ENCODE measurements at regions of chr1 and their contacts with region 1.

Region 1: GRCh38 chr1:182604169-182605164 is at the start of gene RGS16:
- DNase-seq: peak; percentile 97
- H3K4me3 Mint-ChIP-seq: no peak within 1 kb of the TSS
- H3K27ac Mint-ChIP-seq: no peak within 1 kb of the TSS
- H3K4me1 Mint-ChIP-seq: peaks cover 45% of the 10 kb centered on the region
- H3K27me3 Mint-ChIP-seq: no peaks in the 10 kb centered on the region
- total RNA-seq, gene RGS16: 35.3 to 37.3 TPM

Region 2: DNA sequence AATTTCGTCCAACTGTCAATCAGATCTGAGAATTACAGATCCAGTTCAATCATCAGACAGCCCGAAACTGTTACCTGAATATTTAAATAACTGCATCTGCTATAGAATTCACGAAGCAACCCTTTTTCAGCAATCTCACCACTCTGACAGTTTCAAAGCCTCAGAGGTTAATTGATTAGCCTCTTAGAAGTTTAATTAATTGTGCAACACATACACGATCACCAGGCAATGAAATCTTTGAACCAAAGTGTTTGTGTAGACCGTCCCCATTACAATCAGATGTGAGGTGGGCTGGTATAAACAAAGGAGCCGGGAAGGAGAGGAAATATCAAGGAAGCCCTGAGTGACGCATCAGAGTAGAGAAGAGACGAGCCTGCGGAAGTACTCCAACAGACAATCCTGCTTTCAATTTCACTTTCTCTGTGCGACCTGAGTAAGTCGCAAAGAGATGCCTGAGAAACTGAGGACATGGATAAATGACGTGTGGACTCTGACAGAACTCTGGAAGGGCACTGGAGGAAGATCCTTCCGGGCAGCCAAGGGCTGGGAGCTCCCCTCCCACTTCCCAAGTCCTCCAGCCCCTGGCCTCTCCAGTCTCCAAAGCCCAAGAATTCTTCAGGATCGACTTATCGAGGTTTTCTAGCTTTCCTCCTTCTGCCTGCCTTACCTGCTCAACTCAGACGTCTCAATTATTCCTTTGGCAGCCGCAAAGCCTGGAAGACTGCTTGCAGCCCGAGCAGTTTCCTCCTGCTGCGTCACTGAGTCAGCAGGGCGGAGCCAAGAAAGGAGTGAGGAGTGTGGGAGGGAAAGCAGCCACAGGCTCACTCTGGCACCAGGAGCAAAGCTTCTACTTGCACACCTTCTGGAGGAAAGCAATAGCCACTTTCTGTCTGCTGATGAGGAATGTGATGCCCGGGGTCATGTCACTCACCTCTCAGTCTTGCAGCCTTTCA is 15.7 kb before region 1 on chr1 and contains the start of gene RNASEL:
- CTCF ChIA-PET with region 1: interaction called, 92 read pairs
- intact Hi-C with region 1: loop called (anchors 1 kb)
- DNase-seq: peak; percentile 62
- H3K4me3 Mint-ChIP-seq: peak within 1 kb of the TSS; percentile 86
- H3K27ac Mint-ChIP-seq: peak within 1 kb of the TSS; percentile 98
- H3K4me1 Mint-ChIP-seq: peaks cover 49% of the 10 kb centered on the region
- H3K27me3 Mint-ChIP-seq: no peaks in the 10 kb centered on the region
- total RNA-seq, gene RNASEL: 2.5 TPM

Region 3: DNA sequence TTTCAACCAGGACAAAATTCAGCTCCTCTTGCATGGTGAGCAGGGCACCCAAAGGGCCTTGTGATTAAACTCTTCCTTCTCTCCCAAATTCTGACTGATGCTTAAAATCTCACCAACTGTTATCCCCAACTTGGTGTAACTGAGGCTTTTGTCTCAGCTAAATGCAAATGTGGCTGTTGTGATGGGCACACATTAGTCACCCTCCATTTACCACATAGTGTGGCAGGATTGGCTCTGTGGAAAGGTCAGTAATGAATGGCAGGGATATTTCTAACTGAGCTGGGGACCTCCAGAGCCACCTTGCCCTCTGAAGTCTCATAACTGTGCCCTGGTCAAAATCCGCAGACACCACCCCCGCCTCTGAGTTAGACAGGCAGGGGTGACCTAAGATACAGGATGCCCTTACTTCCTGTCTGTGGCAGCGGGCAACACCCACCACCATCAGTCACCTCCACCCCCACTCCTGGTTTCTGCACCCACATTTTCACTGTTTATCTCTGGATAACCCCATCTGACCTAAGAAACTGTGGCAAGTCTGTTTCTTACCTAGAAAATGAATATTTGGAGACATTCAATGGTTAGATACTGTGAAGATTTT is 25.1 kb after region 1 on chr1:
- CTCF ChIA-PET with region 1: interaction called, 6 read pairs
- intact Hi-C with region 1: loop called (anchors 1 kb)
- DNase-seq: peak; percentile 68
- H3K4me3 Mint-ChIP-seq: no peak overlapping the region
- H3K27ac Mint-ChIP-seq: peak overlapping the region; percentile 51
- H3K4me1 Mint-ChIP-seq: peaks cover 57% of the 10 kb centered on the region
- H3K27me3 Mint-ChIP-seq: no peaks in the 10 kb centered on the region

Region 4: GRCh38 chr1:182674346-182675246 is 70.1 kb after region 1 on chr1:
- CTCF ChIA-PET with region 1: interaction called, 12 read pairs
- intact Hi-C with region 1: loop called (anchors 1 kb)
- DNase-seq: no peak
- H3K4me3 Mint-ChIP-seq: no peak overlapping the region
- H3K27ac Mint-ChIP-seq: no peak overlapping the region
- H3K4me1 Mint-ChIP-seq: peaks cover 3% of the 10 kb centered on the region
- H3K27me3 Mint-ChIP-seq: peaks cover 4% of the 10 kb centered on the region

Region 5: GRCh38 chr1:182703540-182703939 is 99.1 kb after region 1 on chr1:
- CTCF ChIA-PET with region 1: no interaction called
- intact Hi-C with region 1: no loop called
- DNase-seq: no peak
- H3K4me3 Mint-ChIP-seq: no peak overlapping the region
- H3K27ac Mint-ChIP-seq: no peak overlapping the region
- H3K4me1 Mint-ChIP-seq: no peaks in the 10 kb centered on the region
- H3K27me3 Mint-ChIP-seq: peaks cover 9% of the 10 kb centered on the region

Region 6: DNA sequence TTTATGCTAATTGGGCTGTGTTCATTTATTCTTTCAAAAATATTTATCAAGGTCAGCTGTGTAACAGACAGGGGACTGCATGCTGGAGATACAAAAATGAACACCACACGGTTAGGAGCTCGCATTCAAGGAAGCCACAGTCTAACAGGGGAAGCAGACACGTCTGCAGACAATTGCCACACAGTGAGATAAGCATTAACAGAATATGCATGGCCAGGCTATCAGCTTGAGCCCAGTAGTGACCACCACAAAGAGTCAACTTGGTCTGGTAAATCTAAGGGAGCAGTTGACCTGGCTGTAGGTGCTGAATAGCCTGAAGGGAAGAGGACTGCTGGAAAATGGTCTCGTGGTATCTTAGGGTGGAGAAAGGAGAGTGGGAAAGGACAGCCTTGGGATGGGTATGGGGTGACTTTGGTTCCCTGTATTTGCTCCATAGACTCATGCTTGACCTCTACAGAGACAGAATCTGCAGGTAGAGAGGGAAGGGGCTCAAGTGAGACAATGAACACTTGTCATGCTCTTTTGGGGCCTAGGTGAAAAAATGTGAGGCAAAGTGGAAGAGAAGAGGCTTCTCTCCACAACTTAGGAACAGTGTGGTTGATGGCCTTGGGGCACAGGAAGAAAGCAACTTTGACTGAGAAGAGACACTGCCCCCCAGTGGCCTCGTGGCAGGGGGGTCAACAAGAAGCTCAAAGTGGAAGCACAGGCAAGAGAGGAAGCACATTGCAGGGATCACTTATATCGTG is 177.5 kb after region 1 on chr1:
- CTCF ChIA-PET with region 1: interaction called, 797 read pairs
- intact Hi-C with region 1: loop called (anchors 1 kb)
- DNase-seq: peak; percentile 89
- H3K4me3 Mint-ChIP-seq: no peak overlapping the region
- H3K27ac Mint-ChIP-seq: no peak overlapping the region
- H3K4me1 Mint-ChIP-seq: peaks cover 18% of the 10 kb centered on the region
- H3K27me3 Mint-ChIP-seq: no peaks in the 10 kb centered on the region